ENCODE measurements at regions of chr9 and their contacts with region 1.

Region 1: DNA sequence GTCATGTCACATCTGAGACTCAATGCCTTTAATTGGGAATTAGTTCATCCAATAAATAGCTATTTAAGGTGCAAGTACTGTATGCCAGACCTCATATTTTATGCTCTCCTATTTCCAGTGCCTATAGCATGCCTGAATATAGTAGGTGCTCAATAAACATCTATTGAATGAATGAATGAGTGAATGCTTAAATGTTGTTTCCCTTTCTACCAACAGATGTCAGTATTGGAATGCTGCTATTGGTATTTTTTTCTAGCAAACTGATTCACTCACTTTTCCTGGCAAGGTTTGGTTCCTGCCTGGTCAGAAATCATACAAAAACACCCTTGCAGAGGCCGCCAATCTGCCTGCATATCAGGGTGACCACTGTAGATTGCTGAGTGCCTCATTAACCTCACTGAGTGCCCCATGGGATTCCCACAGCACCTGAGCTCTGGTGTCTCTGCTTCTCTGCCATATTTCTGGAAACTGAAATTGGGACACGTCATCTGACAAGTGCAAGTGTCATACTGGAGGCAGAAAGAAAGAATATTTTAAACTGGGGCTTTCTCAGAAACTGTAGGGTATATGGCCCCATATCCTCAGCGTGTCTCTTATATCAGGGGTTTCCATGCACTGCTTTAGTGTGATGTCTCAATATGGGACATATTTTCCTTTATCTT is 359.7 kb downstream of the TRIM32 start:
- DNase-seq: no peak
- H3K4me3 ChIP-seq: no peak overlapping the region
- H3K27me3 ChIP-seq: no peaks in the 10 kb centered on the region
- CTCF ChIP-seq: 0 out of 2 replicates have a peak, but pooled peaks have one; percentile 4

Region 2: DNA sequence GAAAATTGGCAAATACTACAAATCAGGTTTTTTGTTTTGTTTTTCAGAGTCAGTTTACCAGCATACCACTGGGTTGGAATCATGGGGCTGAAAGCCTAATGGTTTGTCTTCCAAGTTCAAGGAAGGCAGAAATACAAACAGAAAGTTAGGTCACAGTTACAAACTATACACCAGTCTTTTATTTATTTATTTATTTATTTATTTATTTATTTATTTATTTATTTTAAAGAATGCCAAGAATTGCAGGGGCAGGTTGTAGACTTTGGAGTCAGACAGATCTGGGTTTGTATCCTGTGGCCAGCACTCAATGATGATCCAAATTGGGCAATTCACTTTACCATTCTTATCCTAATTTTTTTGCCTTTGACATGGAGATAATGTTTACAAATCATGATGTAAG is 14.2 kb after region 1 on chr9:
- CTCF ChIA-PET with region 1: interaction called, 15 read pairs
- POLR2A ChIA-PET with region 1: no interaction called
- DNase-seq: no peak
- H3K4me3 ChIP-seq: no peak overlapping the region
- H3K27me3 ChIP-seq: no peaks in the 10 kb centered on the region
- CTCF ChIP-seq: no peak

Region 3: GRCh38 chr9:117205806-117206205 is 159.0 kb after region 1 on chr9:
- CTCF ChIA-PET with region 1: no interaction called
- POLR2A ChIA-PET with region 1: no interaction called
- DNase-seq: no peak
- H3K4me3 ChIP-seq: no peak overlapping the region
- H3K27me3 ChIP-seq: no peaks in the 10 kb centered on the region
- CTCF ChIP-seq: no peak